ENCODE measurements at regions of chr2 and their contacts with region 1.

Region 1: DNA sequence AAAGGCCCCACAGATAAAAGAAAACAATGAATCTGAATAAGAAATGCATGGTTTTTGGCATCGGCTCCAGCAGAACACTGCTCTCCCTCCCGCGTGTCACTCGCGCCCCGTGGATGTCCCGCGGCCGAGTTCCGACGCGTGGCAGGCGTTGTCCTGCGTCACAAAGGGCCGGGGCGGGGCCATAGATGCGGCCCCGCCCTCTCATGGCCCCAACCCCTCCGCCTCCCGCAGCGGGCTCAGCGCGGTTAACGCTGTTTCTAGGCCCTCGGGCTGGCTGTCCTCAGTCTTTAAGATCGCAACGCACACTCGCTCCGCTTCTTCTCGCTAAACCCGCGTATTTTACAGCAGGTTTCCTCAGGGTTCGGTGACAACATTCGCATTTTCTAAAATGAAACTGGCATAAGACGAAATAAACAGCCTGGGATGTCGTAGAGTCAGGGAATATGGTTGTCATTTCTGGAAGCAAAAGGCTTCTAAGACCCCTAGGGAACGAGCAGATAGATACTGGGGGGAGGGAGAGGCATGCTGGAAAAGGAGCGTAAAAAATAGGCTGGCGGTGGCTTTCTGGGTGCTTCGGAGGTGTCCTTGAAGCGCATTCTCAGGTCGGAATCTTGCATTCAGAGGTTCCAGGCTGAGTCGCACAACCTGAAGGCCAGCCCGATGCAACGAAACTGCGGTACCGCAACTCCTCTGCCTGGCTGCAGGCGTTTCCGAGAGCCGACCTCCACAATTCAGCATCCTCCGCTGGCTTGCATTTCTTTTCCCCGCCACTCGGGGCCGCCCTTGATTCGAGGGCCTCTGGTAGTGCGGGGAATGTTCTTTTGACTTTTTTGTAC is at the start of gene FKBP7:
- DNase-seq: peak; percentile 72
- H3K4me3 ChIP-seq: peak within 1 kb of the TSS; percentile 73 to 95 (median 88)
- H3K27ac ChIP-seq: peak within 1 kb of the TSS; percentile 91
- H3K4me1 ChIP-seq: peaks cover 25% of the 10 kb centered on the region
- H3K27me3 ChIP-seq: no peaks in the 10 kb centered on the region
- CTCF ChIP-seq: peak; percentile 75 to 77
- total RNA-seq, gene FKBP7: 1.6 to 2.3 TPM

Region 2: DNA sequence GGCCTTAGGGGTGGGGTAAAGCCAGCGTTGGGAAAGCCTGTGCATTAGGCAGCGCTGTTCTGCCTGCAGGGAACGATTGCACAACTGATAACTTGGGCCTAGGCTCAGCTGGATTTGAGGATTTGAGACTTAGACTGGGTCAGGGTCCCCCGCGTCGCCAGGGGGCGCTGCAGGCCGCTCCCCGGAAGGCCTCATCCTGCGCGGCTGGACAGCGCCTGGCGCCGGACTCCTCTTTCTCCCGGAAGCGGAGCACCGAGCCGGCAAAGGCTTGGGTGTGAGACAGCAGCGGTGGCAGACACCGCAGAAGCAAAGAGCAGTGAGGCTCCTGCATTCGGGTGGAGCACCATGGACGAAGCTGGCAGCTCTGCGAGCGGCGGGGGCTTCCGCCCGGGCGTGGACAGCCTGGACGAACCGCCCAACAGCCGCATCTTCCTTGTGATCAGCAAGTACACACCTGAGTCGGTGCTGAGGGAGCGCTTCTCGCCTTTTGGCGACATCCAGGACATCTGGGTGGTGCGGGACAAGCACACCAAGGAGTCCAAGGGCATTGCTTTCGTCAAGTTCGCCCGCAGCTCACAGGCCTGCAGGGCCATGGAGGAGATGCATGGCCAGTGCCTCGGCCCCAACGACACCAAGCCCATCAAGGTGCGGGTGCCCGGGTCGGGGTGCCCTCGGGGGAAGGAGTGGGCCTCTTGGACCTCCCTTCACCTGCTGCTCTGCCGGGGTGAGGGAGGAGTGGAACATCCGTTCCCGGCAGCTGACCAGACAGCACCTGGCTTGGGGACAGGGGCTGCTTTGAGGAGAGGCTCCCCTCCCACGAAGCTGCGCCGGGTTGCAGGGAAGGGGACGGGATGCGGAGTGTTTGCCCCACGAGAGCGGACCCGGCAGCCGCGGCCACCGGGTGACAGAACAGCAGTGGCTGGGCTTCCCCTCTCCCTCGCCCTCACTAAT is 366.2 kb before region 1 on chr2 and contains the start of gene RBM45:
- CTCF ChIA-PET with region 1: no interaction called
- dilution Hi-C with region 1: no loop called
- in situ Hi-C with region 1: no loop called
- intact Hi-C with region 1: loop called (anchors 1 kb)
- DNase-seq: peak; percentile 95
- H3K4me3 ChIP-seq: peak within 1 kb of the TSS; percentile 74 to 85 (median 75)
- H3K27ac ChIP-seq: peak within 1 kb of the TSS; percentile 22
- H3K4me1 ChIP-seq: peaks cover 17% of the 10 kb centered on the region
- H3K27me3 ChIP-seq: no peaks in the 10 kb centered on the region
- CTCF ChIP-seq: peak; percentile 94 to 100
- total RNA-seq, gene RBM45: 12.1 to 15.5 TPM

Region 3: GRCh38 chr2:178450774-178451525 is 27.7 kb before region 1 on chr2 and contains the starts of genes PJVK and PRKRA:
- CTCF ChIA-PET with region 1: no interaction called
- dilution Hi-C with region 1: no loop called
- in situ Hi-C with region 1: no loop called
- intact Hi-C with region 1: loop called (anchors 1 kb)
- DNase-seq: peak; percentile 96
- H3K4me3 ChIP-seq: peak within 1 kb of the TSS; percentile 74 to 98 (median 88)
- H3K27ac ChIP-seq: peak within 1 kb of the TSS; percentile 79
- H3K4me1 ChIP-seq: peaks cover 27% of the 10 kb centered on the region
- H3K27me3 ChIP-seq: no peaks in the 10 kb centered on the region
- CTCF ChIP-seq: no peak
- total RNA-seq, gene PJVK: 1.3 to 4.3 TPM
- total RNA-seq, gene PRKRA: 49.0 to 66.8 TPM

Region 4: DNA sequence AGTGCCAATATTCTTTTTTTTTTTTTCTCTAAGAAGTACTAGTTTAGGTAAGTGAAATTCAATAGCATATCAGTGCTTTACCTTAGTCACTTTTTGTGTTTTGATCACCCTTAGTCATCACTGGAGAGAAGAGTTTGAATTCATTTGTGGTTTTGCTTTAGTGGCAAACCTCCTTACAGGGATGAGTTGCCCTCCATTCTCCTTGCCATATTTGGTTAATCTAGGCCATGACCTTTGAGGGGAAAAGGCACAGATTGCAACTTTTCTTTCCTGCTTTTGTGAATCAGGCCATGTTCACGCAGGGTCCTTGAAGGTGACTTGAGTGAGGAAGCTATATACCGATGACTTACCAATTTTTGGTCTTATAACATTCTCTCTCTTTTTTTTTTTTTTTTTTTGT is 36.0 kb after region 1 on chr2:
- CTCF ChIA-PET with region 1: no interaction called
- dilution Hi-C with region 1: no loop called
- in situ Hi-C with region 1: no loop called
- intact Hi-C with region 1: loop called (anchors 2 kb)
- DNase-seq: peak; percentile 88
- H3K4me3 ChIP-seq: no peak overlapping the region
- H3K27ac ChIP-seq: no peak overlapping the region
- H3K4me1 ChIP-seq: peaks cover 15% of the 10 kb centered on the region
- H3K27me3 ChIP-seq: no peaks in the 10 kb centered on the region
- CTCF ChIP-seq: no peak

Region 5: GRCh38 chr2:178522950-178523595 is 44.4 kb after region 1 on chr2:
- CTCF ChIA-PET with region 1: no interaction called
- dilution Hi-C with region 1: no loop called
- in situ Hi-C with region 1: no loop called
- intact Hi-C with region 1: loop called (anchors 1 kb)
- DNase-seq: peak; percentile 59
- H3K4me3 ChIP-seq: peak overlapping the region; percentile 35 to 65 (median 61)
- H3K27ac ChIP-seq: peak overlapping the region; percentile 44
- H3K4me1 ChIP-seq: peaks cover 2% of the 10 kb centered on the region
- H3K27me3 ChIP-seq: no peaks in the 10 kb centered on the region
- CTCF ChIP-seq: peak; percentile 75 to 76

Region 6: DNA sequence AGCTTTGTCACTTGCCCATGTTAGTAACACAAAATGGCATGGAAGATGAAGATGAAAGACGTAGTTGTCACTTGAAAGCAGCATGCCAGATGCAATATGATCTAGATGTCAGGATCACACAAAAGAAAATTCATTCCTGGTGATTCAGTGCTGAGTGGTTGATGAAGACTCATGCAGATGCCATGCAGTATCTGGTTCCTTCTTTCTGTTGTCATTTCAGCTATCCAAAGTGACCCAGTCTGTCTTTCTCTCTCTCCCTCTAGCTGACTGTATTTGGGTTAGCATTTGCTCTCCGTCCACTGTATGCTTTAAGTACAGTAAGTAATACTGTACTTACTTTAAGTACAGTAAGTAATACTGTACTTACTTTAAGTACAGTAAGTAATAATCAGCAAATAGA is 278.2 kb after region 1 on chr2:
- CTCF ChIA-PET with region 1: no interaction called
- dilution Hi-C with region 1: no loop called
- in situ Hi-C with region 1: no loop called
- intact Hi-C with region 1: loop called (anchors 5 kb)
- DNase-seq: peak; percentile 56
- H3K4me3 ChIP-seq: no peak overlapping the region
- H3K27ac ChIP-seq: no peak overlapping the region
- H3K4me1 ChIP-seq: peaks cover 20% of the 10 kb centered on the region
- H3K27me3 ChIP-seq: no peaks in the 10 kb centered on the region
- CTCF ChIP-seq: no peak

Region 7: DNA sequence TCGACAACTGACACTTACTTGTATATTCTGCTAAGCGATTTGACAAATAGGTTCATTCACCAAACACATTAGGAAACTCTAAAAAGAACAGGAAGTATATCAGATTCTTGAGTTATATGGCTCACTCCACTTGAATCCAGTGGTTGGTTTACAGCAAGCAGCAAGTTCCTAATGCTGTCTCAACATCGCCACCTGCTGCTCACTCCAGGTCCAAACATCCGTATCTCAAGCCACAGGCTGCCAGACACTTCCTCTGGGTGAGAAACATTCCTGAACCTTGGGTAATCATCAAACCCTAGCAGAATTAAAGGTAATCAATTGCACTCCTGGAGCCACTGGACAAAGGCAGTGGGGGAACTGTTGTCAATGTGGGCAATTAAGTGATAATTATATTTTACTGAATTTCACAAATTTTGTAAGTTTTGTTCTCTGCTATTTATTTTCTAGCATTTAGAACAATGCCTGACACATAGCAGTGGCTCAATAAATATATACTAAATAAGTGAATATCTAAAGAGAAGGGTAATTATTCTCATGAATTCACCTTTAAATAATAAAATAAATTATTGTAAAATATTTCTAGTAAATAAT is 435.7 kb after region 1 on chr2:
- CTCF ChIA-PET with region 1: no interaction called
- dilution Hi-C with region 1: no loop called
- in situ Hi-C with region 1: no loop called
- intact Hi-C with region 1: loop called (anchors 2 kb)
- DNase-seq: peak; percentile 75
- H3K4me3 ChIP-seq: no peak overlapping the region
- H3K27ac ChIP-seq: no peak overlapping the region
- H3K4me1 ChIP-seq: peaks cover 11% of the 10 kb centered on the region
- H3K27me3 ChIP-seq: no peaks in the 10 kb centered on the region
- CTCF ChIP-seq: peak; percentile 87 to 92

Measured in mammary epithelial cell (primary cell).